Activated CD4-positive, alpha-beta memory T cell treated with anti-CD3 and anti-CD28 coated beads for 36 hours (primary cell): ENCODE measurements at regions of chr1 and their contacts with region 1.

Region 1: GRCh38 chr1:169711469-169712281 is at the start of gene SELL:
- DNase-seq: peak; percentile 85
- H3K4me3 Mint-ChIP-seq: peak within 1 kb of the TSS; percentile 71
- H3K27ac Mint-ChIP-seq: peak within 1 kb of the TSS; percentile 81
- H3K4me1 Mint-ChIP-seq: peaks cover 21% of the 10 kb centered on the region
- H3K27me3 Mint-ChIP-seq: peaks cover 2% of the 10 kb centered on the region
- total RNA-seq, gene SELL: 103 to 110 TPM

Region 2: DNA sequence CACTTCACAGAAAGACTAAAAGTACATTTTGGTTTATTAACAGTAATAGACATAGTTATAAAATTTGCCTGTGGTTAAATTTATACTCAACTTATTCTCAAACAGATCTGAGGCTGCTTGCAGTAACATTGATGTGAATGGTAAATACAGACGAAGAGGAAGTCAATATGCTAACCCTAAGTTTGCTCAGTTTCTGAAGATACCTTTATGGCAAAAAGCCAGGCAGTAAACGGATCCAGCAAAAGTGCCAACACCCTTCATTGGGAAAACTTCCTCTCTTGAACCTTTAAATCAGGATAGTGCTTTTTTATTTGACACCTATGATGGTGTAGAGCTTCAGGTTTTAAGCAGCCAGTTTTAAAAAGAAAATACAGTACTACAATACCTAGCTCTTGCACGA is 267.8 kb before region 1 on chr1:
- CTCF ChIA-PET with region 1: no interaction called
- POLR2A ChIA-PET with region 1: no interaction called
- intact Hi-C with region 1: no loop called
- DNase-seq: no peak
- H3K4me3 Mint-ChIP-seq: no peak overlapping the region
- H3K27ac Mint-ChIP-seq: no peak overlapping the region
- H3K4me1 Mint-ChIP-seq: no peaks in the 10 kb centered on the region
- H3K27me3 Mint-ChIP-seq: peaks cover 5% of the 10 kb centered on the region

Region 3: DNA sequence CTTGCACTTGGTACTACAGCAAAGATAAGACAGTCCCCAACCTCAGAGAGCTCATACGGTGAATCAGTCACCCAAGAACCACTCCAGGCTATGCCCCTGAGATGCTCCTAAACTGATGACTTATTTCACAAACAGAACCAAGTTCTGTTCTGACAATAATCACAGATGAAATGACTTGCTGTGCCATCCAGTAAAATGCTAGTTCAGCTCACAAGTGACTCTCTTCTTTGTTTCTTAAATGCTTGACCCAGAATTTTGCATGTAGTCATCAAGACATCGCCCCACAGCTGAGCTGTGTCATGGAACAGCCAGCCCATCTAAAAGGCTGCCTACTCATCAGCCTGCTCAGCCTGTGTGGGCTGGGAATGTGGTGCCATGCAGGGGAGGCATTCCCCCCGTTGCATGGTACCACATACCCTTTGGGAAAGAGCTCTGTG is 219.8 kb before region 1 on chr1:
- CTCF ChIA-PET with region 1: interaction called, 3 read pairs
- POLR2A ChIA-PET with region 1: no interaction called
- intact Hi-C with region 1: loop called (anchors 1 kb)
- DNase-seq: peak; percentile 82
- H3K4me3 Mint-ChIP-seq: no peak overlapping the region
- H3K27ac Mint-ChIP-seq: peak overlapping the region; percentile 47
- H3K4me1 Mint-ChIP-seq: peaks cover 56% of the 10 kb centered on the region
- H3K27me3 Mint-ChIP-seq: peaks cover 3% of the 10 kb centered on the region

Region 4: GRCh38 chr1:169529068-169529696 is 182.5 kb before region 1 on chr1:
- CTCF ChIA-PET with region 1: no interaction called
- POLR2A ChIA-PET with region 1: no interaction called
- intact Hi-C with region 1: no loop called
- DNase-seq: no peak
- H3K4me3 Mint-ChIP-seq: no peak overlapping the region
- H3K27ac Mint-ChIP-seq: no peak overlapping the region
- H3K4me1 Mint-ChIP-seq: peaks cover 2% of the 10 kb centered on the region
- H3K27me3 Mint-ChIP-seq: no peaks in the 10 kb centered on the region

Region 5: DNA sequence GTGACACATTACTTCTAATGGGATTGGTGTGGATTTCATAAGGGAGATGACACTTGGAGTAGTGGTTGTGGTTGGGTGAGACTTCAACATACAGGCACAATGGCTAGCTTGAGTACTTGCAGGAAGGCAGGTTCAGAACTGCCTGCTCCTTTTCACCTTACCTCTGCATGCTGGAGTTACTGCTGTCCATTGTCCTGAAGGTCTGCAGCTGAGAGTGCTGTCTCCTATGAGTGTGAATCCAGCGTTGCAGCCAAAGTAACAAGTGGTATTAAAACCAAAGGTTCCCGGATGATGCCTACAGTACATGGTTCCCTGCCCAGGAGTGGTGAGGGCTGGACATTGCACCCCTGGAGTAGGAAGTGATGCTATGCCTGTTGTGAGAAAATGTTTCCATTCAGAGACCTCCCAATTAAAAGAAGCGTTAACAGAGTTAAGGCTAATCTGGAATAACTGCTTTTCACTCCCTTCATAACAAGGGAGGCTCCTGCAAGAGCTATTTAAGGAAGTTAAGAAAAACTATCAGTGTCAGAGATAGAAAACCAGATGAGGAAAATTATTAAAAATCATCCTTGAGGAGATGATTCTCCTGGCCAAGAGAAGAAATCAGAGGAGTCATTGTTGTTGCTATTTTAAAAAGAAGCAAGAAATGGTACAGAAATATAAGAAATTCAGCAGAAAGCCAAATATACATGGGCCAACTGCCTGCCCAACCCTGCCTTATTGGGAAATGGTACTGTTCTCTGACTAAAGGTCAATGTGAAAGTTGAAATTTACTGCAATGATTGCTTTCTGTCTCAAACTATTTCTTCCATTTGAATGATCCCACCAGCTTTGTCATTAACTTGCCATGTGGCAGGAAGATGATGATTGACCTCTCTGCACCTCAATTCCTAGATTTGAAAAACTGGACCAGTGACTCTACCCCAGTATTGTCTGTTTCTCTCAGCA is 115.6 kb before region 1 on chr1:
- CTCF ChIA-PET with region 1: interaction called, 208 read pairs
- POLR2A ChIA-PET with region 1: interaction called, 8 read pairs
- intact Hi-C with region 1: loop called (anchors 1 kb)
- DNase-seq: peak; percentile 54
- H3K4me3 Mint-ChIP-seq: no peak overlapping the region
- H3K27ac Mint-ChIP-seq: no peak overlapping the region
- H3K4me1 Mint-ChIP-seq: peaks cover 53% of the 10 kb centered on the region
- H3K27me3 Mint-ChIP-seq: peaks cover 3% of the 10 kb centered on the region

Region 6: DNA sequence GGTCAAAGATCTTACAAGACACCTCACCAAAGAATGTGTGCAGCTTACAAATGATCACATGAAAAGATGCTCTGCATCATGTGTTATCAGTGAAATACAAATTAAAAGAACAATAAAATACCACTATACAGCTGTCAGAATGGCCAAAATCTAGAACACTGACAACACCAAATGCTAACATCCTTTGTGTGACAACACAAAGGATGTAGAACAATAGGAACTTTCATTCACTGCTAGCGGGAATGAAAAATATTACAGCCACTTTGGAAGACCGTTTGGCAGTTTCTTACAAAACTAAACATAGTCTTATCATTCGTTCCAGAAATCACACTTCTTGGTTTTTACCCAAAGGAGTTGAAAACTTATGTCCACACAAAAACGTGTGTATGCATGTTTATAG is 61.1 kb before region 1 on chr1:
- CTCF ChIA-PET with region 1: interaction called, 6 read pairs
- POLR2A ChIA-PET with region 1: no interaction called
- intact Hi-C with region 1: loop called (anchors 5 kb)
- DNase-seq: no peak
- H3K4me3 Mint-ChIP-seq: no peak overlapping the region
- H3K27ac Mint-ChIP-seq: no peak overlapping the region
- H3K4me1 Mint-ChIP-seq: peaks cover 50% of the 10 kb centered on the region
- H3K27me3 Mint-ChIP-seq: no peaks in the 10 kb centered on the region

Region 7: DNA sequence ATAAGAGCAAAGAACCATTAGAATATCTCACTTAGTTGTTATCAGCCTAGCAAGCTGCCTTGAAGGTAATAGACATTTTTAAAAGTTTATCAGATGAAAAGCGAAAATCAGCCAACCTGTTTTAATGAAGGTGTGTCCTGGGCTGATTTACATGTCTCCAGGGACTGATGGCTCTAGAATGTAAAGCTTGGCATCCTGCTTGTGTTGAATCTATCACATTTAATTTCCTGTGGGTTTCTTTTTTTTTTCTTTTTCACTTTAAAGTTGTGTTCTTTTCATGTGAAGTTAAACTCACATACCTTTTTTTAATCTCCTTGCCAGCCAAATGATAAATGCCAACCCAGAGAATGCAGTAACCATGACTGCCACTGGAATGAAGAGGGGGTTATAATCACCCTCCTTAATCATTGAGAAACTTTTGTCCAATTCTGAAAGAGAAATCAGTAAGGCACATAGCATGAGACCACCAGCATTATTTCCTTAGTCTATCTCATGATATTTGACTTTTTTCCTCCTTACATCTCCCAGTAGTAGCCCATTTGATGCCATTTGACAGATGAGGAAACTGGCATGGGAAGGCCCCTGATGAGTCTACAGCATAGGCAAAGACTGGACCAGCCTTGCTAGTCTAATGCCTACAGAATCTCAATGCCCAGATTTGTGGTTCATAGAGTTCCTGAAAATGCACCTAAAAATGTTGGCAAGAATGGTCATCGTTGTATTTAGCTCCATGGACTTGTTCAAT is 10.2 kb before region 1 on chr1:
- CTCF ChIA-PET with region 1: interaction called, 19 read pairs
- POLR2A ChIA-PET with region 1: interaction called, 5 read pairs
- intact Hi-C with region 1: no loop called
- DNase-seq: no peak
- H3K4me3 Mint-ChIP-seq: no peak overlapping the region
- H3K27ac Mint-ChIP-seq: peak overlapping the region; percentile 90
- H3K4me1 Mint-ChIP-seq: peaks cover 97% of the 10 kb centered on the region
- H3K27me3 Mint-ChIP-seq: no peaks in the 10 kb centered on the region

Region 8: DNA sequence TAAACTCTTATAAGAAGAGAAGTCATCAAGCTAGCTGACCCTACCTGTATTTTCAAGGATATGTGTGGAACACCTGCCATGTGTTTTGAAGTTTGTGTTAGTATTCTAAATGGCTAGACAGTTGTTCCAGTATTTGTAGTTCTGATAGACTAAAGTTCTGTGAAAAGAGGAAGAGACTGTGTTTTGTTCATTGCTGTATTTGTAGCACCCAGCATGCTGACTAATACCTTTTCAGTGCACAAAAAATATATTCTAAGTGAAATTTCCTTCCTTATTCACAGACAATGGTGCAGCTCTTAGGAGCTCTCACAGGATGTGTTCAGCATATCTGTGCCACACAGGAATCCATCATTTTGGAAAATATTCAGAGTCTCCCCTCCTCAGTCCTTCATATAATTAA is 91.2 kb after region 1 on chr1:
- CTCF ChIA-PET with region 1: no interaction called
- POLR2A ChIA-PET with region 1: no interaction called
- intact Hi-C with region 1: no loop called
- DNase-seq: no peak
- H3K4me3 Mint-ChIP-seq: no peak overlapping the region
- H3K27ac Mint-ChIP-seq: no peak overlapping the region
- H3K4me1 Mint-ChIP-seq: peaks cover under 1% of the 10 kb centered on the region
- H3K27me3 Mint-ChIP-seq: no peaks in the 10 kb centered on the region

Region 9: GRCh38 chr1:171485375-171486047 is 1773.8 kb after region 1 on chr1 and contains the start of gene PRRC2C:
- CTCF ChIA-PET with region 1: no interaction called
- POLR2A ChIA-PET with region 1: no interaction called
- intact Hi-C with region 1: loop called (anchors 10 kb)
- DNase-seq: peak; percentile 96
- H3K4me3 Mint-ChIP-seq: peak within 1 kb of the TSS; percentile 83
- H3K27ac Mint-ChIP-seq: peak within 1 kb of the TSS; percentile 93
- H3K4me1 Mint-ChIP-seq: peaks cover 43% of the 10 kb centered on the region
- H3K27me3 Mint-ChIP-seq: no peaks in the 10 kb centered on the region
- total RNA-seq, gene PRRC2C: 191 to 205 TPM